ENCODE measurements at regions of chr6 and their contacts with region 1.

Region 1: DNA sequence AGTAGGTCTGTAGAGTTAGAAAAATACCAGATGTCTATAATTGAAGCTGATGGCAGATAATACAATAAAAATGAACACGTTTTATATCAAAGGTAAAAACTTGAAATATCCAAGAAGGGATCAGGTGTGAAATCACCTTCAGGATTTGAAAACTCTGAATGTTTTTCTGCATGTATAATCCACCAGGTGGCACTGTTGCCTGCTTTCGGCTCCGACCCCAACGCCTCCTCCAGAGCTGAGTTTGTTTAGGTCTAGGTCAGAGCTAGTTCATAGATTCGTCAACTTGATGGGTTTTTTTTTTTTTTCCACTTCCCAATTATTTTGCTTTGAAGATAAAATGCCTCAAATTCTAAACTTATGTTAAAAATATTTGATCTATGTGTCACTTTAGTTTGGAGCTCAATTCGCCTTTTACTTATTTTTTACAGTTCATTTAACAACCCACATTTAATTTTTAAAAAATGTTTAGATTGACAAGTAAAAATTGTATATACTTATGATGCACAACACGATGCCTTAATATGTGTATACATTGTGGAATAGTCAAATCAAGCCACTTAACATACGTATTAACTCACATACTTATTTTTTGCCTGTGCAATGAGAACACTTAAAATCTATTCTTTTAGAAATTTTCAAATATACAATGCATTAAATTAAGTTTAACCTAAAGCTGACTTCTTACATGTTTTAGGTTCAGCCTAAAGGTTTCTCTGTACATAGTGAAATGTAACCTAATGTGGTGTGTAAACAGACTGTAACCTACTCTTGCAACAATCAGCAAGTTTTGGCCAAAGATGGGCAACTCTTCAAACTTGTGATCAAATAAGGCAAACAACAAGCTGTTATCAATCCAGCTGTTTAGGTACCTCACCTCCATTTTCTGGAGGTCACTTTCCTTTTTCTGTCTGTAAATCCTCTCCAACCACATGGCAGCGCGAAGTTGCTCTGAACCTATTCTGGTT is 39.4 kb upstream of the ENPP4 start:
- DNase-seq: peak; percentile 56 to 82 (median 73)
- H3K4me3 ChIP-seq: no peak overlapping the region
- H3K27ac ChIP-seq: no peak overlapping the region
- H3K4me1 ChIP-seq: no peaks in the 10 kb centered on the region
- H3K27me3 ChIP-seq: no peaks in the 10 kb centered on the region
- CTCF ChIP-seq: peak; percentile 87

Region 2: GRCh38 chr6:46407776-46408530 is 317.6 kb after region 1 on chr6:
- intact Hi-C with region 1: loop called (anchors 10 kb)
- DNase-seq: peak in 3 of 5 donors; percentile 16 to 46 (median 21)
- H3K4me3 ChIP-seq: no peak overlapping the region
- H3K27ac ChIP-seq: no peak overlapping the region
- H3K4me1 ChIP-seq: peaks cover 0 to 5% (median 0%) of the 10 kb centered on the region in 3 donors
- H3K27me3 ChIP-seq: no peaks in the 10 kb centered on the region
- CTCF ChIP-seq: no peak

Region 3: GRCh38 chr6:46510651-46511050 is 420.3 kb after region 1 on chr6:
- intact Hi-C with region 1: no loop called
- DNase-seq: peak in 3 of 5 donors; percentile 19 to 69 (median 53)
- H3K4me3 ChIP-seq: no peak overlapping the region
- H3K27ac ChIP-seq: no peak overlapping the region
- H3K4me1 ChIP-seq: peaks cover 0 to 7% (median 0%) of the 10 kb centered on the region in 3 donors
- H3K27me3 ChIP-seq: no peaks in the 10 kb centered on the region
- CTCF ChIP-seq: no peak

Region 4: GRCh38 chr6:46637145-46637544 is 546.7 kb after region 1 on chr6:
- intact Hi-C with region 1: no loop called
- DNase-seq: no peak
- H3K4me3 ChIP-seq: no peak overlapping the region
- H3K27ac ChIP-seq: no peak overlapping the region
- H3K4me1 ChIP-seq: no peaks in the 10 kb centered on the region
- H3K27me3 ChIP-seq: no peaks in the 10 kb centered on the region
- CTCF ChIP-seq: no peak